ENCODE measurements at regions of chr13 and their contacts with region 1.

Region 1: GRCh38 chr13:41222259-41222852 is 28.0 kb upstream of the KBTBD7 start:
- DNase-seq: no peak
- ATAC-seq: peak; percentile 90 to 92
- H3K4me3 ChIP-seq: no peak overlapping the region
- H3K27ac ChIP-seq: no peak overlapping the region
- H3K4me1 ChIP-seq: no peaks in the 10 kb centered on the region
- H3K27me3 ChIP-seq: no peaks in the 10 kb centered on the region
- CTCF ChIP-seq: peak; percentile 80

Region 2: GRCh38 chr13:41075034-41075433 is 147.3 kb before region 1 on chr13:
- intact Hi-C with region 1: loop called (anchors 10 kb)
- DNase-seq: no peak
- ATAC-seq: peak in 1 of 2 donors; percentile 36
- H3K4me3 ChIP-seq: no peak overlapping the region
- H3K27ac ChIP-seq: no peak overlapping the region
- H3K4me1 ChIP-seq: no peaks in the 10 kb centered on the region
- H3K27me3 ChIP-seq: no peaks in the 10 kb centered on the region
- CTCF ChIP-seq: peak; percentile 56

Measured in lower lobe of right lung (tissue), 2 donors.